A673 (cell line): ENCODE measurements at regions of chr19 and their contacts with region 1.

Region 1: DNA sequence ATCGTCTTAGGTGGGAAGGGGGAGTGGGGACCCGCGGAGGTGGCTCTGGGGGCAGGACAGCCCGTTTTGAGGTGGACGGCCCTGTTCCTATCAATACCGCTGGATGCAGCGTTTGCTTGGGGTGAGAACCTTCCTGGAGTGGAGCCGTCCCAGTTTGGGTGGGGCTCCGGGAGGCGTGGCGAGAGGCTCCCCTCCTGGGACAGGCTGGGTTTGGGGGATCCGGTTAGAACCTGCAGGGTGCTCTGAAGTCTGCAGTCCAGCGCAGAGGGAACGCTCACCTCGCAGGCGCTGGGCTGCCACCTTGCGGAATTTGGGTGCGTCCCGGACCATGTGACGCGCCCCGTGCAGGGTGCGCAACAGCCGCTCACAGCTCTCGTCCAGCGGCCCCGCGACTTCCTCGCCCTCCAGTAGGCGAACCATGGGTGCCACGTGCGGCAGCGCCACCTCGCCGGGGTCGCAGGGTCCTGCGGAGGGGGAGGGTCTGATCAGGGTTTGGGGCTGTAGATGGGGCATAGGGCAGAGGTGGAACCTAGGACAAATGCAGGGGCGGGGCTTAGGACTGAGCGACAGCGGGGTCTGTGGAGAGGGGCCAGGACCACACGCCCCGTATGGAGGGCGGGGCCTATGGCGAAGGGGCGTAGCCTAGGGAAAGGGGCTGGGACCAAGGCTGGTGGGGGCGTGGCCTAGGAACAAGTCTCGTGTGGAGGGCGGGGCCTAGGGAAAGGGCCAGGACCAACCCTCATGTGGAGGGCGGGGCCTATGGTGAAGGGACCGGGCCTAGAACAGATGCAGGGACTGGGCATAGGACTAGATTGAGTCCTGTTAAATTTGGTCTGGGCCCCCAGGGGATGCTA is 13.8 kb downstream of the SH2D3A start:
- DNase-seq: peak; percentile 96
- H3K4me3 ChIP-seq: peak overlapping the region; percentile 50
- H3K27ac ChIP-seq: peak overlapping the region; percentile 48
- H3K4me1 ChIP-seq: peaks cover 3% of the 10 kb centered on the region
- H3K27me3 ChIP-seq: no peaks in the 10 kb centered on the region
- CTCF ChIP-seq: peak; percentile 62

Region 2: GRCh38 chr19:6516659-6517291 is 236.6 kb before region 1 on chr19:
- CTCF ChIA-PET with region 1: interaction called, 10 read pairs
- POLR2A ChIA-PET with region 1: no interaction called
- intact Hi-C with region 1: loop called (anchors 5 kb)
- DNase-seq: peak; percentile 97
- H3K4me3 ChIP-seq: peak overlapping the region; percentile 64
- H3K27ac ChIP-seq: peak overlapping the region; percentile 72
- H3K4me1 ChIP-seq: peaks cover 4% of the 10 kb centered on the region
- H3K27me3 ChIP-seq: no peaks in the 10 kb centered on the region
- CTCF ChIP-seq: peak; percentile 99

Region 3: GRCh38 chr19:6767357-6768235 is 14.2 kb after region 1 on chr19 and contains the start of gene SH2D3A:
- CTCF ChIA-PET with region 1: no interaction called
- POLR2A ChIA-PET with region 1: no interaction called
- intact Hi-C with region 1: loop called (anchors 1 kb)
- DNase-seq: peak; percentile 95
- H3K4me3 ChIP-seq: peak within 1 kb of the TSS; percentile 52
- H3K27ac ChIP-seq: peak within 1 kb of the TSS; percentile 49
- H3K4me1 ChIP-seq: peaks cover 11% of the 10 kb centered on the region
- H3K27me3 ChIP-seq: no peaks in the 10 kb centered on the region
- CTCF ChIP-seq: no peak
- total RNA-seq, gene SH2D3A: 0.95 and 1.7 TPM in 2 replicates